Activated T-helper 1 cell treated with anti-CD3 and anti-CD28 coated beads, Interleukin-12 subunit alpha, Interleukin-12 subunit beta, Interleukin-2, Interleukin-4 antibody, amounts not matched to agents 30 ng/mL and 10 ng/mL and 1 ng/mL, durations not matched to agents 14 hours and 24 hours and 36 hours (primary cell): ENCODE measurements at regions of chr1 and their contacts with region 1.

Region 1: DNA sequence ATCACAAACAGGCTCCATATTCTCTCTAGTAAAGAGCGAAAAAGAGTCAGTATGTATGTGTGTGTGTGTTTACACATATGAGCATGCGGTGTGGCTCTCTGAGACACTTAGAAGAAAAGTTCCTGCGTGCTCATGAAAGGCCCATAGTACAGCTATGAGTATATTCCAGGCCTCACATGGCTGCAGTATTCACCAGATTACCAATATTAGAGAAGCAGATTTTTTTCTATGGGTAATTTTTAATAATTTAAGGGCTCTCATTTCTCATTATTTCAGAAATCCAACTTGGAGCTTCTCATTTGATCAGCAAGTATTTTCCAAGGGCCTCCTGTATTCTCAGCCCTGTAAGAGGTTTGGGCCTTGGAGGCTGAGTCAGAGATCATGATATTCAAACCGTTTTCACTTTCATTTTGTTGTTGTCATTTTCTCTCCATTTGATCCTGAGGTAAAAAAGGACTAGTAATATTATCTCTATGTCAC is 232.9 kb upstream of the SGIP1 start:
- DNase-seq: peak; percentile 48
- H3K4me3 Mint-ChIP-seq: peak overlapping the region; percentile 80
- H3K27ac Mint-ChIP-seq: peak overlapping the region; percentile 94
- H3K4me1 Mint-ChIP-seq: peaks cover 47% of the 10 kb centered on the region
- H3K27me3 Mint-ChIP-seq: no peaks in the 10 kb centered on the region

Region 2: DNA sequence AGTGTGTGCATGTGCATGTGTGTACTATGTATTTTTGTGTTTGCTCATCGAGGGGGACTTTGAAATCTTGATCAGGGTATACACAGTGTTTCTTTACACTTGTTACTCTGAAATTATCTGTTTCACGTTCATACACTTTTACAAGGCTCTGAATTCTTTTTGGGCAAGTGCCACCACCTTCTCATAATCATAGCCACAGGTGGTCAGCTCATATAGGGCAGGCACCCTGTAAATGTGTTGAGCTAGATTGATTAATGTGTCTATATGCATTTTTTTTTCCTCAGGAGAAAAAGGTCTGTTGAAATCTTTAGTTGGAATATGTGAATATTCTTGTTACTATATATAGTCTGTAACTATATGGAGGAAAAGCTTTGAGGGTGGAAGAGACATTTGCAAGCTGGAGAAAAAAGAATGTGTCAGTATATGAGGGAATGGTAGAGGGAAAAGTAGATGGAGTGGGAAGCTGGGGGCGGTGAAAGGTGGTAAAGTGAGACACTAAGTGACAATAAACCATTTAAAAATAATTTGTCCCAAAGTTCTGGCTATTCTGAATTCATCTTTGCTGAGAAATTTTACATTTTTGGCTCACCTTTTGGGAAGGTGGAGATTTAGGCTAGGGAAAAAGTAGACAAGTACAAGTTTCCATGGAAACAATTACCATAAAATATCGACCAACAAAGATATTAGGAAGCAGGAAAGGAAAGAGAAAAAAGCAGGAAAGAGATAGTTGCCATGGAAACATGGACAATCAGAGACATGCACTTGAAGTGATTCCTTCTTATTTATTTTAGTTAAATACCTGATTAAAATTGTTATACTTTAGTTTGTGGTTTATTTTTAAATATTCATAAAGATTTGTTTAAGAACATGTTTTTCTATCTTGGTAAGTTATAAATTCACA is 230.8 kb before region 1 on chr1:
- intact Hi-C with region 1: no loop called
- DNase-seq: no peak
- H3K4me3 Mint-ChIP-seq: no peak overlapping the region
- H3K27ac Mint-ChIP-seq: no peak overlapping the region
- H3K4me1 Mint-ChIP-seq: no peaks in the 10 kb centered on the region
- H3K27me3 Mint-ChIP-seq: peaks cover 36% of the 10 kb centered on the region

Region 3: GRCh38 chr1:66258404-66259105 is 42.5 kb before region 1 on chr1:
- intact Hi-C with region 1: loop called (anchors 2 kb)
- DNase-seq: no peak
- H3K4me3 Mint-ChIP-seq: no peak overlapping the region
- H3K27ac Mint-ChIP-seq: peak overlapping the region; percentile 53
- H3K4me1 Mint-ChIP-seq: peaks cover 83% of the 10 kb centered on the region
- H3K27me3 Mint-ChIP-seq: peaks cover 2% of the 10 kb centered on the region

Region 4: DNA sequence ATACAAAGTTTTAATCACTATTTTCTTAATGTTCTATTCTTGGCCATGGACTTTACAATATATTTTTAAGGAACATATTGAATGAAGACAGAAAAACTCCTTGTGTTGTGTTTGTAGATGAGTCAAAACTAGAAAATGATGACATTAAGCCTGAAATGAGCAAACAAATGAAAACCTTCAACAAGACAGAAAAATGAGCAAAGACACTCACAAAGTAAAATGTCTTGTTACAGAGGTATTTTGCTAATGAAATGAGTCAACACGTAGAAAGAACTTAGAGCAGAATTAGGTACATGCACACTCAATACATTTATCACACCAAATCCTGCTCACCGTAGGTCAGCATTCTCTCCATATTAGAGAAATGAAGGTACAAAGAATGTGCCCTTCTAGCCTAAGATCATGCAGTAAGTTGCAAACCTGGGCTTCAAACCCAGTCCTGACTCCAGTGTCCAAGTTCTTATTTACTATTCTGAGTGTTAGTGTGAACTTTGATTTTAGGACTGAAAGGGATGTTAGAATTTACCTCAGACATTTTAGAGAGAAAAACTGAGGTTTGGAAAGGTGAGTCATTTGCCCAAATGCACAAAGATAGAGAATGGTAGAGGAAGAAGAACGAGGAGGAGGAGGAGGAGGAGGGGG is 99.0 kb after region 1 on chr1:
- intact Hi-C with region 1: loop called (anchors 1 kb)
- DNase-seq: no peak
- H3K4me3 Mint-ChIP-seq: peak overlapping the region; percentile 67
- H3K27ac Mint-ChIP-seq: peak overlapping the region; percentile 88
- H3K4me1 Mint-ChIP-seq: peaks cover 47% of the 10 kb centered on the region
- H3K27me3 Mint-ChIP-seq: no peaks in the 10 kb centered on the region

Region 5: GRCh38 chr1:66436378-66437145 is 135.6 kb after region 1 on chr1:
- intact Hi-C with region 1: loop called (anchors 1 kb)
- DNase-seq: peak; percentile 34
- H3K4me3 Mint-ChIP-seq: no peak overlapping the region
- H3K27ac Mint-ChIP-seq: peak overlapping the region; percentile 2
- H3K4me1 Mint-ChIP-seq: peaks cover 45% of the 10 kb centered on the region
- H3K27me3 Mint-ChIP-seq: no peaks in the 10 kb centered on the region